Activated CD4-positive, alpha-beta T cell treated with anti-CD3 and anti-CD28 coated beads for 36 hours (primary cell): ENCODE measurements at regions of chr14 and their contacts with region 1.

Region 1: DNA sequence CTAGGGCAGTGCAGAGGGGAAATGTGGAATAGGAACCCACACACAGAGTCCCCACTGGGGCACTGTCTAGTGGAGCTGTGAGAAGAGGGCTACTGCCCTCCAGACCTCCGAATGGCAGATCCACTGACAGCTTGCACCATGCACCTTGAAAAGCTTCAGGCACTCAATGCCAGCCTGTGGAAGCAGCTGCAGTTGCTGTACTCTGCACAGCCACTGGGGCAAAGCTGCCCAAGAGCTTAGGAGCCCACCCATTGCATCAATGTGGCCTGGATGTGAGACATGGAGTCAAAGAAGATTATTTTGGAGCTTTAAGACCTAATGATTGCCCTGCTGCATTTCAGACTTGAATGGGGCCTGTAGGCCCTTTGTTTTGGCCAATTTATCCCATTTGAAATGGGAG is 21.7 kb upstream of the CCDC88C start:
- DNase-seq: no peak
- ATAC-seq: no peak
- H3K4me3 Mint-ChIP-seq: no peak overlapping the region
- H3K27ac Mint-ChIP-seq: no peak overlapping the region
- H3K4me1 Mint-ChIP-seq: no peaks in the 10 kb centered on the region
- H3K27me3 Mint-ChIP-seq: no peaks in the 10 kb centered on the region

Region 2: GRCh38 chr14:91466192-91466591 is 26.8 kb after region 1 on chr14:
- CTCF ChIA-PET with region 1: no interaction called
- POLR2A ChIA-PET with region 1: no interaction called
- intact Hi-C with region 1: no loop called
- DNase-seq: no peak
- ATAC-seq: no peak
- H3K4me3 Mint-ChIP-seq: no peak overlapping the region
- H3K27ac Mint-ChIP-seq: peak overlapping the region; percentile 9
- H3K4me1 Mint-ChIP-seq: peaks cover 42% of the 10 kb centered on the region
- H3K27me3 Mint-ChIP-seq: no peaks in the 10 kb centered on the region

Region 3: DNA sequence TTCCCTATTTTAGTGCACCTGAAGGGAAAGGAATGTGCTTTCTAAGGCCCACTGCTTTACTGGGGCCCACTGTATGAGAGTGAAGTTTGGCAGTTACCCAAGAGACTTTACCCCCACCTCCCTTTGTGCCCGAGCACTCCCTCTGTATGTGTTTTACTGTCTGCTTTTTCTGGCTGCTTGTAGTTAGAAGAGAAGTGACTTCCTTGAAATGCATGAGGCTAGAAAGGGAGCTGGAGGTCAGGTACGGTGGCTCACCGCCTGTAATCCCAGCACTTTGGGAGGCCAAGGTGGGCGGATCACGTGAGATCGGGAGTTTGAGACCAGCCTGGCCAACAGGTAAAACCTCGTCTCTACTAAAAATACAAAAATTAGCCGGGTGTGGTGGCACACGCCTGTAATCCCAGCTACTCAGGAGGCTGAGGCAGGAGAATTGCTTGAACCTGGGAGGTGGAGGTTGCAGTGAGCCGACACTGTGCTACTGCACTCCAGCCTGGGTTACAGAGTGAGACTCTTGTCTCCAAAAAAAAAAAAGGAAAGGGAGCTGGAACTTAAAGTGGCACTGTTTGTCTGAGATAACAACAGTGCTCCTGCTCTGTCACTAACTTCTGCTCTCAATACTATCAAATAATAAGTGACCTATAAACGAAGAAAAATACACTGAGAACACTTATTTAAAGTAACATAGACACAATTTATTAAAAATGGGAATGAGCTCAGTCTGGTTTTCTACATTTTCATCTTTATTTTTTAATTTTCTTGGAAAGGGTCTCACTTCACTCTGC is 594.8 kb after region 1 on chr14:
- CTCF ChIA-PET with region 1: no interaction called
- POLR2A ChIA-PET with region 1: interaction called, 12 read pairs
- intact Hi-C with region 1: no loop called
- DNase-seq: no peak
- ATAC-seq: no peak
- H3K4me3 Mint-ChIP-seq: no peak overlapping the region
- H3K27ac Mint-ChIP-seq: peak overlapping the region; percentile 75
- H3K4me1 Mint-ChIP-seq: peaks cover 38% of the 10 kb centered on the region
- H3K27me3 Mint-ChIP-seq: no peaks in the 10 kb centered on the region